GM12878 (cell line): ENCODE measurements at regions of chr2 and their contacts with region 1.

Region 1: DNA sequence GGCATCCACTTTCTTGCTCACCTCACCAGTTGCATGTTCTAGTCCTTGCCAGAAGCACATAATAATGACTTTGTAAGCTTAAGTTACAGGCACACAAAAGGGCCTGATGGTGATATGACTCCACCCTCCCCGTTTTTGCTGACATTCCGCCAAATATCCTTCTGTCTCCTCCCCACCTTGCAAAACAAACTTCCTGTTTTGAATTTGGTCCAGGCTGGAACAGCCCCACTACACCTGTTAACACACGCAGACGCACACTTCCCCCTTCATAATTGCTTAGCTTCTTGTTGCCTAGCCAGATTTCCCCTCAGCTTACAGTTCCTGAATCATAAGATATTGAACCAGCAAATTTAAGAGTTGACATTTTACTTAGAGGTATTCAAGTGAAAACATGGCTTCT is at the start of gene MGAT5:
- DNase-seq: no peak
- ATAC-seq: peak; percentile 8
- H3K4me3 ChIP-seq: peak within 1 kb of the TSS; percentile 21; the same call in 1 of the 2 replicates
- H3K27ac ChIP-seq: peak within 1 kb of the TSS; percentile 67
- H3K4me1 ChIP-seq: peaks cover 82% of the 10 kb centered on the region
- H3K27me3 ChIP-seq: no peaks in the 10 kb centered on the region
- CTCF ChIP-seq: no peak
- EP300 ChIP-seq: no peak
- POLR2A ChIP-seq: no peak
- RAD21 ChIP-seq: no peak
- polyA plus RNA-seq, gene MGAT5: 9.1 to 9.8 TPM

Region 2: DNA sequence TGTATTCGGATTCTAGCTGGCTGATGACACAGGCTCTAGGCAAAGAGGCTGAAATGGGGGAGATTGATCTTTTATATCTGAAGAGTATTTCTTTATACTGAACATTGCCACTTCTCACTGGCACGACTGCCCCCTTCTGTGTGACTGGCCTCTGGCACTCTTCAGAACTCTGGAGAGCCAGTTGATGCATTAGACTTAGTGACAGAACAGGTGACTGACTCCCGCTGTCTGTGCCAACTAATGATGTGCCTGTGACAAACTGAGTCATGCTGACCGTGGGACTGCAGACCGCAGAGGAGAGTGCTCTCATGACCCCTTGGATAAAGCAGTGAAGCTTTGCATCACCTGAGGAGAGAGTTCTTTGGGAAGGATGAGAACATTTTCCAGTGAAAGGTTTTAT is 14.5 kb after region 1 on chr2:
- CTCF ChIA-PET with region 1: interaction called, 19 read pairs
- POLR2A ChIA-PET with region 1: interaction called, 4 read pairs
- RAD21 ChIA-PET with region 1: interaction called, 7 read pairs
- SMC1A ChIA-PET with region 1: interaction called, 27 read pairs
- in situ Hi-C with region 1: no loop called
- intact Hi-C with region 1: no loop called
- DNase-seq: no peak
- ATAC-seq: no peak
- H3K4me3 ChIP-seq: no peak overlapping the region
- H3K27ac ChIP-seq: no peak overlapping the region
- H3K4me1 ChIP-seq: peaks cover 29% of the 10 kb centered on the region
- H3K27me3 ChIP-seq: no peaks in the 10 kb centered on the region
- CTCF ChIP-seq: no peak
- EP300 ChIP-seq: no peak
- POLR2A ChIP-seq: no peak
- RAD21 ChIP-seq: no peak